ENCODE measurements at regions of chr13 and their contacts with region 1.

Region 1: GRCh38 chr13:30114571-30115256 is 192.6 kb downstream of the KATNAL1 start:
- DNase-seq: peak; percentile 63
- ATAC-seq: peak; percentile 82
- H3K4me3 ChIP-seq: peak overlapping the region; percentile 57 to 75 (median 69)
- H3K27ac ChIP-seq: peak overlapping the region; percentile 55
- H3K4me1 ChIP-seq: peaks cover 40% of the 10 kb centered on the region
- H3K27me3 ChIP-seq: peaks cover 0 to 7% of the 10 kb centered on the region in 2 experiments; a peak in 1 of 5 replicates
- CTCF ChIP-seq: peak; percentile 90
- EP300 ChIP-seq: no peak
- POLR2A ChIP-seq: peak; percentile 59 to 66; a peak in 2 of 4 replicates
- RAD21 ChIP-seq: peak; percentile 76

Region 2: GRCh38 chr13:29508130-29508875 is 606.4 kb before region 1 on chr13:
- CTCF ChIA-PET with region 1: interaction called, 3 read pairs
- POLR2A ChIA-PET with region 1: no interaction called
- in situ Hi-C with region 1: loop called (anchors 10 kb)
- intact Hi-C with region 1: no loop called
- DNase-seq: peak; percentile 60
- ATAC-seq: peak; percentile 88
- H3K4me3 ChIP-seq: no peak overlapping the region
- H3K27ac ChIP-seq: no peak overlapping the region
- H3K4me1 ChIP-seq: peaks cover 12% of the 10 kb centered on the region
- H3K27me3 ChIP-seq: peaks cover 0 to 10% of the 10 kb centered on the region in 2 experiments; a peak in 1 of 5 replicates
- CTCF ChIP-seq: peak; percentile 94
- EP300 ChIP-seq: no peak
- POLR2A ChIP-seq: no peak
- RAD21 ChIP-seq: peak; percentile 75

Region 3: DNA sequence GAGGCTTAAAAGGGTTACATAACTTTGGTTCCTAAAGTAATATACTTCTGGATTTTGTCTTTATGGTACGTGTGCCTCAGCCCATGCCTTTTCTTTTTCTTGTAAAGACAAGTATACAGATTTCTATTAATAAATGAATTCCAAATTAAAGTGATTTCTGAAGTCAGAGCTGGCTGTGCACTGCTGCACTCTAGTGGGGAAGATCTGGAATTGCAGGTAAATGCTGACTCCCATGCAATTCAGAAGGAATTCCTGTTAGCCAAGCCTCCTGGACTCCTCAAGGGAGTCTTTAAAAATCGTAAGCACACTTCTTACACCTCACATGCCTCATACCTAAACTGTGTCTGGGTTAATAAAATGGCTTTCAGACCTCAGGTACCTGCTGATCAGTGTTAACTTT is 400.9 kb before region 1 on chr13:
- CTCF ChIA-PET with region 1: no interaction called
- POLR2A ChIA-PET with region 1: no interaction called
- in situ Hi-C with region 1: no loop called
- intact Hi-C with region 1: loop called (anchors 5 kb)
- DNase-seq: no peak
- ATAC-seq: no peak; the same call in 2 of the 3 replicates
- H3K4me3 ChIP-seq: no peak overlapping the region
- H3K27ac ChIP-seq: no peak overlapping the region
- H3K4me1 ChIP-seq: no peaks in the 10 kb centered on the region
- H3K27me3 ChIP-seq: peaks cover 0 to 3% of the 10 kb centered on the region in 2 experiments; a peak in 1 of 5 replicates
- CTCF ChIP-seq: peak; percentile 57
- EP300 ChIP-seq: no peak
- POLR2A ChIP-seq: no peak
- RAD21 ChIP-seq: no peak

Region 4: DNA sequence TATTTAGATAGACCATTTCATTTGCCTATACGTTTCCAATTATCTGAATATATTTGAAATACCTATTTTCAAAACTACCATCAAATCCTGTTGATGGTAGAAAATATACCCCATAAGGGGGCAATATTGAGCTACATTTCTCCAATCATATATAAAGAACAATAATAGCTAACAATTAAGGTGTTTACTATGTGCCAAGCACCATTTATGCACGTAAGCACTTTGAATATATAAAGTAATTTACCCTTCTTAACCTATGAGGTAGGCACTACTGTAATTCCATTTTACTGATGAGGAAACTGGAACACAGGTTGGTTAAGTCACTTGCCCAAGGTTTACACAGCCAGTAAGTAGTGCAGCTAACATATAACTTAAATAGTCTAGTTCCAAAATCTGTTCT is 343.5 kb before region 1 on chr13:
- CTCF ChIA-PET with region 1: interaction called, 46 read pairs
- POLR2A ChIA-PET with region 1: interaction called, 5 read pairs
- in situ Hi-C with region 1: loop called (anchors 5 kb)
- intact Hi-C with region 1: loop called (anchors 1 kb)
- DNase-seq: peak; percentile 23
- ATAC-seq: peak; percentile 25; the same call in 1 of the 3 replicates
- H3K4me3 ChIP-seq: no peak overlapping the region
- H3K27ac ChIP-seq: no peak overlapping the region
- H3K4me1 ChIP-seq: no peaks in the 10 kb centered on the region
- H3K27me3 ChIP-seq: no peaks in the 10 kb centered on the region
- CTCF ChIP-seq: peak; percentile 41
- EP300 ChIP-seq: no peak
- POLR2A ChIP-seq: no peak
- RAD21 ChIP-seq: no peak

Region 5: DNA sequence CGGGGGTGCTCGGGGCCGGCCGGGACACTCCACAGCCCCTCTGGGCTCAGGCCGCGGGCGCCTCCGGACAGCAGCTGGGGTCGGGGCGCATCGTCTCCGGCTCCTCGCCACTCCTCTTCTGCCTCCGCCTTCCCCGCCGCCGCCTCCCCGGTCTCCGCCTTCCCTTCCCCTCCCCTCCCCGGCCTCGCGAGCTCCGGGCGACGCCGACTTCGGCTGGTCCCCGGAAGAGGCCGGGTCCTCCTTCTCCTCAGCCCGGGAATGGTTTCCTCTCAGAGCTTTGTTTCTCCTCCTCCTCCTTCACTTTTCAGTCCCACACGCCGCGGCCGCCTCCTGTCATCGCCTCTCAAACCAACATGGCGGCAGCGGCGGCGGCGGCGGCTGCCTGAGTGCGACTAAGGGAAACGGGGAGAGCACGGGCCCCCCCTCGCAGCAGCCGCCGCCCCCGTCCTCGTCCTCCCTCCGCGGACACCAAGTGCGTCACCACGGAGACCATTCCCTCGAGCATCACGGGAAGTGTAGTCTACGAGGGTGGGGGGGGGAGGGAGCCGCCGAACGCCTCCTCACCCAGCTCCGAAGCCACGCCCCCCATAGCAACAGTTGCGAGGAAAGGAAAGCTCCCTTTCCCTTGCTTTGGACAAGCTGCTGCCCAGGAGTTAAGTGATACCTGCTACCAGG is 264.4 kb before region 1 on chr13 and contains the start of gene UBL3:
- CTCF ChIA-PET with region 1: interaction called, 5 read pairs
- POLR2A ChIA-PET with region 1: interaction called, 10 read pairs
- in situ Hi-C with region 1: no loop called
- intact Hi-C with region 1: loop called (anchors 2 kb)
- DNase-seq: peak; percentile 90
- ATAC-seq: peak; percentile 85
- H3K4me3 ChIP-seq: peak within 1 kb of the TSS; percentile 65 to 96 (median 85)
- H3K27ac ChIP-seq: peak within 1 kb of the TSS; percentile 81
- H3K4me1 ChIP-seq: peaks cover 21% of the 10 kb centered on the region
- H3K27me3 ChIP-seq: no peaks in the 10 kb centered on the region; a peak in 1 of 5 replicates
- CTCF ChIP-seq: 0 out of 2 replicates have a peak, but pooled peaks have one; percentile 14
- EP300 ChIP-seq: peak in 1 of 2 experiments; percentile 15; a peak in 1 of 4 replicates
- POLR2A ChIP-seq: peak; percentile 46 to 64; a peak in 3 of 4 replicates
- RAD21 ChIP-seq: no peak
- total RNA-seq, gene UBL3: 7.4 and 10.9 TPM in 2 replicates

Region 6: DNA sequence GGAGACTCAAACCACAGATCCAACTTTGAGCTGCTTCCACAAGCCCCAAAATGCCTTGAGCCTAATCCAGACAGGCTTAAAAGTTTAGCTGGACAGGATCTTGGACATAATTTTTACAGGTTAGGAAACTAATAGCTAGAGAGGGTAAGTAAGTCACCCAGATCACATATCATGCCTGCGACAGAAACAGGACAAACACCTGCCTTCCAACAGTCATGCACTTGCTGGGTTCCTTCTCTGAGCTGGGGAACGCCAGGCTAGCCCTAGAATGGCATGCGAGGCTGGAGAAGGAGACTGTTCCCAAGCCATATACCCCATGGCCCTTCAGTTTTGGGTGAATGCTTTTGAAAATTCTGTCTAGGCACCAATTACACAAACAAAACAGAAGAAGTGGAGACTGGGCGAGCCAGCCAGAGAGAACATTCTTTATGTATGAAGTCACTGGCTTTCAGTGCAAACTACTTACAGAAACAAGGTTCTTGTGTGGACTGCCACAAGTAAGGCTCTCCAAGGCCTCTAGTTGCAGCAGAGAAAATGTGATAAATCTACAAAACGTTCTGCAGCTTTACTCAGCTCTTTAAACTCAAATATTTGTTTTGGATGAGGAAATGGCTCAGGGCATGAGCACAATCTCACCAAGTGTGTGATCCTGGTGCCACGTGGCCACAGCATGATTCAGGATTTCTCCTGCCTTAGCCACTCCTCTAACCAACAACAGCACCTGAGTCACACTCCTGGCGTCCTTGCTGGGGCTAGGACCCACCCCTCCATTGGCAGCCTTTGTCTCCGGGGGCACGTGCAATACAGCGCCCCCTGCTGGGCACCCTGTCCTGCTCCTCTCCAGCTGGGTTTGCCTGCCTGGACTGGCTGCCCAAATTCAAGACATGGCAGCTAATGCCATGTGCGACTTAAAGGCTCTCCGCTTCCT is 190.9 kb before region 1 on chr13:
- CTCF ChIA-PET with region 1: no interaction called
- POLR2A ChIA-PET with region 1: no interaction called
- in situ Hi-C with region 1: no loop called
- intact Hi-C with region 1: loop called (anchors 2 kb)
- DNase-seq: peak; percentile 99
- ATAC-seq: peak; percentile 96
- H3K4me3 ChIP-seq: peak overlapping the region; percentile 22 to 65 (median 34); a peak in 4 of 6 replicates
- H3K27ac ChIP-seq: peak overlapping the region; percentile 81
- H3K4me1 ChIP-seq: peaks cover 67% of the 10 kb centered on the region
- H3K27me3 ChIP-seq: no peaks in the 10 kb centered on the region
- CTCF ChIP-seq: peak; percentile 93
- EP300 ChIP-seq: peak in 1 of 2 experiments; percentile 91; a peak in 2 of 4 replicates
- POLR2A ChIP-seq: peak in 1 of 2 experiments; percentile 75; a peak in 2 of 4 replicates
- RAD21 ChIP-seq: peak; percentile 90

Region 7: DNA sequence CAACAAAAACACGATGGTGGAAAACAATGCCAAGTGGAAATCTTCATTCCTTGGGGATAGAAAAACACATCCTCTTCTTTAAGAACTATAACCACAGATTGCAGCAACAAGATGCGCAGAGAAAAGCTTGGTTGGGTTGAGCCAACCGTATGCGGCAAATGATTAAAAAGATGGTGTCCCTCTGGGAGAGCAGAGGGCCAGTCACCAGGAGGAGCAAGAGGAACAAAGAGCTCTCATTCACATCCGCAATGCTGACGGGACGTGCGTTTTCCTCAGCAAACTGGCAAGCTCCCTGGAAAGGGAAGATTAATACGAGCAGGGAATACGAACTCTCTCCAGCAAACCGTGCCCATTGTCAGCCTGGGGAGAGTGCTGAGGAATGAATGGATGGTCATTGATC is 51.1 kb after region 1 on chr13:
- CTCF ChIA-PET with region 1: no interaction called
- POLR2A ChIA-PET with region 1: no interaction called
- in situ Hi-C with region 1: no loop called
- intact Hi-C with region 1: no loop called
- DNase-seq: no peak
- ATAC-seq: peak; percentile 51; the same call in 1 of the 3 replicates
- H3K4me3 ChIP-seq: no peak overlapping the region
- H3K27ac ChIP-seq: no peak overlapping the region
- H3K4me1 ChIP-seq: no peaks in the 10 kb centered on the region
- H3K27me3 ChIP-seq: peaks cover 2 to 8% of the 10 kb centered on the region in 2 experiments; a peak in 2 of 5 replicates
- CTCF ChIP-seq: 0 out of 2 replicates have a peak, but pooled peaks have one; percentile 7
- EP300 ChIP-seq: no peak
- POLR2A ChIP-seq: no peak
- RAD21 ChIP-seq: no peak

Region 8: DNA sequence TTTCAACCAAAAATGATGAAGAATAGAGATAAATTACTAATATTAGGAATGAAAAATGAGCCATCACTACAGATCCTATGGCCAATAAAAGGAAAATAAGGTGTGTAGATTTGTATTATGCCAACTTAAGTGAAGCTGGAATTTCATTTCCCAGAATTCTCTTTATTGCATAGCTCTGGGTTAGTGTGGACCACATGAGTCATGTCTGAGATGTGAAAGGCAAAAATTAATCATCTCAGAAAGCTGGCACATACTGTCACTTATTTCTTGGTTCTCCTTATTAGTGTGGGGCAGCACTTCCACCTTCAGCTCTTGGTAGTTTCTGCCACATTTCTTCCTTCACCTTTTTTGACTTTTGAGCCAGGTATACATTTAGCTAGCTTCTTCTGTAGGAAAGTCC is 110.0 kb after region 1 on chr13:
- CTCF ChIA-PET with region 1: no interaction called
- POLR2A ChIA-PET with region 1: no interaction called
- in situ Hi-C with region 1: no loop called
- intact Hi-C with region 1: no loop called
- DNase-seq: no peak
- ATAC-seq: no peak
- H3K4me3 ChIP-seq: no peak overlapping the region
- H3K27ac ChIP-seq: no peak overlapping the region
- H3K4me1 ChIP-seq: no peaks in the 10 kb centered on the region
- H3K27me3 ChIP-seq: no peaks in the 10 kb centered on the region
- CTCF ChIP-seq: no peak
- EP300 ChIP-seq: no peak
- POLR2A ChIP-seq: no peak
- RAD21 ChIP-seq: no peak

Measured in HepG2 (cell line).